Naive thymus-derived CD4-positive, alpha-beta T cell (primary cell): ENCODE measurements at regions of chr13 and their contacts with region 1.

Region 1: DNA sequence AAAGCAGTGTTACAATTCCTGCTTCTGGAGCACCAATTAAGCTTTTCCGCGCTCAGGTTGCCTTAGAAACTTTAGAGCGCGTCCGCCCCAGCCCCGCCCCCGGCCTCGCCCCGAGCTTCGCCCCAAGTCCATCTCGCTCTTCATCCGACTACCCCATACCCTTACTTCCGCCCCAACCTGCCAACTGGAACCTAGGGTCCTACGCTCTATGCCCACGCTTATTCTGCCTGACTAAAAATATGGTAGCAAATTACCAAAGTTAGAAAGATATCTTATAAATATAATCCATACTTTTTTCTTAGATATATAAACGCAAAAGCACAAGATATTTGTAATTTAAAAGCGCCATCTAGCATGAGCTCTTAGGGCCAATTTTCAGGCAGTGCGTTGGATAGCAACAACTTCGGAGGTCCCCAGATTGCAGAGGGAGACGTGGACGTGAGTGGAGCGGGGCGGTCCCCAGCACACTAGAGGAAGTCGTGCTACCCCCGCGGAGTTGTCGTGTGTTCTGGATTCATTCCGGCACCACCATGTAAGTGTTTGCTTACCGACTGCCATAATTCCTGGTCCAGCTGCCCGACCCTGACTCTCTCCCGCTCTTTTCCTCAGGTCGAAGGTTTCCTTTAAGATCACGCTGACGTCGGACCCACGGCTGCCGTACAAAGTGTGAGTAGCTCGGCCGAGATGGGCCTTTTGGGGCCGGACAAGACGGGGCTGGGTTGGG is at the start of gene UFM1:
- DNase-seq: peak; percentile 62 to 94 (median 88)
- ATAC-seq: peak; percentile 97
- H3K4me3 ChIP-seq: peak within 1 kb of the TSS; percentile 98
- H3K4me3 Mint-ChIP-seq: peak within 1 kb of the TSS; percentile 89 to 100 (median 97)
- H3K27ac ChIP-seq: peak within 1 kb of the TSS; percentile 89
- H3K27ac Mint-ChIP-seq: peak within 1 kb of the TSS; percentile 92 to 100 (median 97)
- H3K4me1 ChIP-seq: peaks cover 20% of the 10 kb centered on the region in 2 donors
- H3K4me1 Mint-ChIP-seq: peaks cover 23 to 52% (median 40%) of the 10 kb centered on the region in 7 donors
- H3K27me3 ChIP-seq: no peaks in the 10 kb centered on the region
- H3K27me3 Mint-ChIP-seq: peaks cover 0 to 1% (median 0%) of the 10 kb centered on the region in 5 donors
- total RNA-seq, gene UFM1: 57.5 to 75.5 (median 65.2) TPM

Region 2: DNA sequence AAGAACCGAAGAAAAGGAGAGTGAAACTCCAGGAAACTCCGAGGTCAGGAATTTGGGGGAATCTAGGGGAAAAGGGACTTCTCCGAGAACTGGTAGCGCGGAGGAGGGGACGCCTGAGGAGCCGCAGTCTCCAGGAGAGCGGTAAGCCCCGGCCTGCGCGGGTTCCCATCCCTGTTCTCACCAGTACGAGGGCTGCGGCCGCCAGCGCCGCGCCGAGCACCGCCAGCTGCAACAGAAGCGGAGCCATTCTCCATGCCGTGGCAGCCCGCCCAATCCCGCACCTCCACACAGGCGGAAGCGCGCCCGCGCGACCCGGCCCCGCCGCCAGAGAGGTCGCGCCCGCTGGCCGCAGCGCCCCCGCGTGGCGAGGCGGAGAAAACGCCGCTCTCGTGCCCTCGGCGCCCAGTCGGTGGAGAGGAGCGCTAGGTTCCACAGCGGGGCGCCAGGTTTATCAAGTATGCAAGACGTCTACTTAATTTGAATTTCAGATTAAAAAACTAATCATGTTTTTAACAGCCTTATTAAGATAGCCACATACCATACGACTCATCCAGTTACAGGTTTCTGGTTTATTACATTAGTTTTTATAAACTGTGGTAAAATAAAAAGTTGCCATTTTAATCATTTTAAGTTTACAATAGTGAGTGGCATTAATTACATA is 1350.4 kb before region 1 on chr13 and contains the start of gene ALG5:
- CTCF ChIA-PET with region 1: no interaction called
- POLR2A ChIA-PET with region 1: interaction called, 17 read pairs
- intact Hi-C with region 1: loop called (anchors 1 kb)
- DNase-seq: peak; percentile 91 to 99 (median 96)
- ATAC-seq: peak; percentile 85
- H3K4me3 ChIP-seq: peak within 1 kb of the TSS; percentile 77
- H3K4me3 Mint-ChIP-seq: peak within 1 kb of the TSS; percentile 90 to 100 (median 98)
- H3K27ac ChIP-seq: peak within 1 kb of the TSS; percentile 89
- H3K27ac Mint-ChIP-seq: peak within 1 kb of the TSS; percentile 98 to 100 (median 100)
- H3K4me1 ChIP-seq: peaks cover 12 to 21% of the 10 kb centered on the region in 2 donors
- H3K4me1 Mint-ChIP-seq: peaks cover 23 to 54% (median 46%) of the 10 kb centered on the region in 7 donors
- H3K27me3 ChIP-seq: no peaks in the 10 kb centered on the region
- H3K27me3 Mint-ChIP-seq: peaks cover 0 to 7% (median 0%) of the 10 kb centered on the region in 5 donors
- total RNA-seq, gene ALG5: 12.1 to 39.3 (median 22.8) TPM

Region 3: GRCh38 chr13:37058910-37059847 is 1290.4 kb before region 1 on chr13 and contains the start of gene SUPT20H:
- CTCF ChIA-PET with region 1: no interaction called
- POLR2A ChIA-PET with region 1: no interaction called
- intact Hi-C with region 1: loop called (anchors 1 kb)
- DNase-seq: peak; percentile 85 to 94 (median 91)
- ATAC-seq: peak; percentile 98
- H3K4me3 ChIP-seq: peak within 1 kb of the TSS; percentile 77
- H3K4me3 Mint-ChIP-seq: peak within 1 kb of the TSS; percentile 87 to 99 (median 94)
- H3K27ac ChIP-seq: peak within 1 kb of the TSS; percentile 93
- H3K27ac Mint-ChIP-seq: peak within 1 kb of the TSS; percentile 93 to 99 (median 98)
- H3K4me1 ChIP-seq: peaks cover 13 to 15% of the 10 kb centered on the region in 2 donors
- H3K4me1 Mint-ChIP-seq: peaks cover 13 to 59% (median 50%) of the 10 kb centered on the region in 7 donors
- H3K27me3 ChIP-seq: no peaks in the 10 kb centered on the region
- H3K27me3 Mint-ChIP-seq: peaks cover 0 to 10% (median 0%) of the 10 kb centered on the region in 5 donors
- total RNA-seq, gene SUPT20H: 70.5 to 106 (median 86.1) TPM

Region 4: DNA sequence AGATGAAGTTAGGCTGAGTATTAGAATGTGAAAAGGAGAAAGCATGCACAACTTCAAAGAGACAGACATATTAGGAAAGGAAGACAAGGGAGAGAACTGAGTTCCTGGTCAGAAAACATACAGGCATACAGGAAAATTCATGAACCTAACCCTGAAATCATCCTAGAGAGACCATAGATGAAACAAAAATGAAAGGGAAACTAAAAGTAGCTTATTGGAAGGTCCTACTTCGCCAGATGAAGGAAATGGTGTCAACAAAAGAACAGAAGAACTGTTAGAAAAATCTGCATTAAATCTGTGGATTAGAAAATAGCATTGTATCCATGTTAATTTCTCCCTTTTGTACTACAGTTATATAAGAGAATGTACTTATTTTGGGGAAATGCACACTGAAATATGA is 168.9 kb before region 1 on chr13:
- CTCF ChIA-PET with region 1: no interaction called
- POLR2A ChIA-PET with region 1: no interaction called
- intact Hi-C with region 1: loop called in 1 of 2 experiments (anchors 5 kb)
- DNase-seq: no peak
- ATAC-seq: no peak
- H3K4me3 ChIP-seq: no peak overlapping the region
- H3K4me3 Mint-ChIP-seq: peak overlapping the region; percentile 21 to 79 (median 61)
- H3K27ac ChIP-seq: no peak overlapping the region
- H3K27ac Mint-ChIP-seq: peak overlapping the region in 6 of 9 donors; percentile 2 to 86 (median 29)
- H3K4me1 ChIP-seq: no peaks in the 10 kb centered on the region
- H3K4me1 Mint-ChIP-seq: peaks cover 0 to 25% (median 17%) of the 10 kb centered on the region in 7 donors
- H3K27me3 ChIP-seq: no peaks in the 10 kb centered on the region
- H3K27me3 Mint-ChIP-seq: no peaks in the 10 kb centered on the region

Region 5: DNA sequence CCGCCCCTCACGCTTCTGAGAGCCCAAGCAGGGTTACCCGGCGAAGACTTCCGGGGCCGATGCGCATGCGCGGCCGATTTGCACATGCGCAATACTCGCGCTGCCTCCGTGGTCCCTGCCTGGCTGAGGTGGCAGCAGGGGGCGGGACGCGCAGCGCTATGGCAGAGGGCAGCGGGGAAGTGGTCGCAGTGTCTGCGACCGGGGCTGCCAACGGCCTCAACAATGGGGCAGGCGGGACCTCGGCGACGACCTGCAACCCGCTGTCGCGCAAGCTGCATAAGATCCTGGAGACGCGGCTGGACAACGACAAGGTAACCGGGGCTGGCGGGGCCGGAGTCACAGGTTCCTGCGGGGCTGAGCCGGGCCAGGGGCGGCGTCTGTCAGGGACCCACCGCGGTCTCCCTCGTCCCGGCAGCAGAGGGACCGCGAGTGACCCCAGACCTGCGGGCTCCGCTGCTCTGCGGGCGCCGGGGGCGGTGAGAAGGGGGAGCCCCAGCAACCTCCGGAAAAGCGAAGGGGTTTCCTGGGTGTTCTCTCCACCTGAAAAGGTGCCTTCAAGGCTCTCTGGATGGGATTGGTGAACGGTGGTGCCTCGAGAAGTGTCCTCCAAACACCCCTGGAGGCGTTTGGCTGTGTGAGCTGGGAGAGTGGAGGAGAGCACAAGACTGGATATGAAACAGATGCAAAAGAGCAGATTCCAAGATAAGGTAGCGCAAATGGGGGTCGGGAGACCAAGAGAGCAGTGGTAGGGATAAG is 1306.2 kb after region 1 on chr13 and contains the start of gene COG6:
- CTCF ChIA-PET with region 1: no interaction called
- POLR2A ChIA-PET with region 1: no interaction called
- intact Hi-C with region 1: loop called in 1 of 2 experiments (anchors 2 kb)
- DNase-seq: peak; percentile 88 to 99 (median 94)
- ATAC-seq: peak; percentile 93
- H3K4me3 ChIP-seq: peak within 1 kb of the TSS; percentile 79
- H3K4me3 Mint-ChIP-seq: peak within 1 kb of the TSS; percentile 89 to 100 (median 96)
- H3K27ac ChIP-seq: peak within 1 kb of the TSS; percentile 79
- H3K27ac Mint-ChIP-seq: peak within 1 kb of the TSS; percentile 79 to 97 (median 90)
- H3K4me1 ChIP-seq: peaks cover 4 to 5% of the 10 kb centered on the region in 2 donors
- H3K4me1 Mint-ChIP-seq: peaks cover 19 to 46% (median 43%) of the 10 kb centered on the region in 7 donors
- H3K27me3 ChIP-seq: no peaks in the 10 kb centered on the region
- H3K27me3 Mint-ChIP-seq: peaks cover 0 to 14% (median 4%) of the 10 kb centered on the region in 5 donors
- total RNA-seq, gene COG6: 19.4 to 41.6 (median 32.3) TPM